Activated CD8-positive, alpha-beta memory T cell treated with anti-CD3 and anti-CD28 coated beads, Interleukin-2, amount 10 ng/mL, durations not matched to agents 7 days and 5 days (primary cell): ENCODE measurements at regions of chrX and their contacts with region 1.

Region 1: DNA sequence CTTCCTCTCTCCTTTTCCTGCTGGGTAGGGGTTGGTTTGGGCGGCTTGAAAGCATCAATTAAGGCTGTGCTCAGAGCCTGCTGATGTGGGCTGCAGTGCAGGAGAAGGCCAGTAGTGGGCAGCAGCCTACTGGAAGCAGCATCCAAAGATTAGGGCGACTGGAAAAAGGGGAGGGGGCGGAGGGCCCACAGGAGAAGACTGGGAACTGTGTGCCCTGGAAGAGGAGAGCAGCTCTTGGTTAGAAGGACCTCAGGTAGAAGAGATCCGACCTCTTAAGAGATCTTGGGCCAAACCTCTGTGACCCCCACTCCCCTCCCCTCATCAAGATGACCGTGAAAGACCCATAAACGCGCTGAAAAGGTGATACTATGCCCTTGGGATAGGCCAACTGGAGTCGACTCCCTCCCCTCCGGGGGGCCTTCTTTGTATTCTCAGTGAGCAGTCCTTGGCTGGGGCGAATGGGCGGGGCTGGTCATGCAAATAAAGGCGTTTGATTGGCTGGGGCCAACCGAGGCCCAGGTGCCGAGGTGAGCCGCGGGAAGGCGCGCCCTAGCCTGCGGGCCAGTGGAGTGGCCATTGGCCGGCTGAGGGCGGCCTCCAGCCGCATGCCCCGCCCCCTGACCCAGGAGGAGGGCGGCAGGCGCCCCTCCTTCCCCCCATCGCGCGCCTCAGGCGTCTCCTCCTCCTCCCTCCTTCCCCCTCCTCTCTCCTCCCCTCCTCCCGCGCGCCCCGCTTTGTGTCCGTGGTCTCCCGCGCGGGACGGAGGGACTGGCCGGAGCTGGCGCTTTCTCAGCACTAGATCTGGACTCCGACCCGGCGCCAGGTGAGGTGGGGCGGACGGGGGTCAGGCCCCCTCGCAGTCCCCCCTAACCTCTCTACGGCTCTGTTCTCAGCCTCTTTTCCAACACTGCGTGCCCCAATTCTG is 10.1 kb downstream of the DLG3 start:
- DNase-seq: peak; percentile 89
- ATAC-seq: peak; percentile 74
- H3K4me3 Mint-ChIP-seq: peak overlapping the region; percentile 83
- H3K27ac Mint-ChIP-seq: peak overlapping the region; percentile 91
- H3K4me1 Mint-ChIP-seq: peaks cover 44% of the 10 kb centered on the region
- H3K27me3 Mint-ChIP-seq: no peaks in the 10 kb centered on the region

Region 2: GRCh38 chrX:70433848-70434351 is 20.8 kb before region 1 on chrX:
- CTCF ChIA-PET with region 1: interaction called, 26 read pairs
- DNase-seq: peak; percentile 84
- ATAC-seq: peak; percentile 82
- H3K4me3 Mint-ChIP-seq: peak overlapping the region; percentile 88
- H3K27ac Mint-ChIP-seq: peak overlapping the region; percentile 91
- H3K4me1 Mint-ChIP-seq: peaks cover 37% of the 10 kb centered on the region
- H3K27me3 Mint-ChIP-seq: no peaks in the 10 kb centered on the region

Region 3: GRCh38 chrX:70554081-70554480 is 99.4 kb after region 1 on chrX:
- CTCF ChIA-PET with region 1: interaction called, 22 read pairs
- DNase-seq: no peak
- ATAC-seq: peak; percentile 47
- H3K4me3 Mint-ChIP-seq: no peak overlapping the region
- H3K27ac Mint-ChIP-seq: peak overlapping the region; percentile 68
- H3K4me1 Mint-ChIP-seq: peaks cover 19% of the 10 kb centered on the region
- H3K27me3 Mint-ChIP-seq: no peaks in the 10 kb centered on the region

Region 4: DNA sequence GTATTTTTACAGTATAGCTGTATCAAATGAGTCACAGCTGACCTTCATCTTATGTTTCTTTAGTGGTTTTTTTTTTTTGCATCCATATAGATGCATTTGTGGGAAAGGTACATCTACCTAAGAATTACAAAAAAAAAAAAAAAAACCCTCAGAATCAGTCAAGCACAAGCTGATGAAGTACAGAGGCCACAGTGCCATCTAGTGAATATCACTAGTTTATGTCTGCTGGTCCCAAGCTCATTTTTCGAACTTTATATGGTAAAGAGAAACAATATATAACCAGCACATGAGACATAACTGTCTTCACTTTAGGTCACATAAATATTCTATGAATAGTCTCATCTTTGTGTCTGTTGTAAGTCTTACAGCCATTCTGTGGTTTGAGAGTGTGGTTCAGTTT is 210.0 kb after region 1 on chrX:
- CTCF ChIA-PET with region 1: interaction called, 11 read pairs
- DNase-seq: no peak
- ATAC-seq: peak; percentile 69
- H3K4me3 Mint-ChIP-seq: no peak overlapping the region
- H3K27ac Mint-ChIP-seq: no peak overlapping the region
- H3K4me1 Mint-ChIP-seq: no peaks in the 10 kb centered on the region
- H3K27me3 Mint-ChIP-seq: peaks cover 8% of the 10 kb centered on the region